ENCODE measurements at regions of chr7 and their contacts with region 1.

Region 1: DNA sequence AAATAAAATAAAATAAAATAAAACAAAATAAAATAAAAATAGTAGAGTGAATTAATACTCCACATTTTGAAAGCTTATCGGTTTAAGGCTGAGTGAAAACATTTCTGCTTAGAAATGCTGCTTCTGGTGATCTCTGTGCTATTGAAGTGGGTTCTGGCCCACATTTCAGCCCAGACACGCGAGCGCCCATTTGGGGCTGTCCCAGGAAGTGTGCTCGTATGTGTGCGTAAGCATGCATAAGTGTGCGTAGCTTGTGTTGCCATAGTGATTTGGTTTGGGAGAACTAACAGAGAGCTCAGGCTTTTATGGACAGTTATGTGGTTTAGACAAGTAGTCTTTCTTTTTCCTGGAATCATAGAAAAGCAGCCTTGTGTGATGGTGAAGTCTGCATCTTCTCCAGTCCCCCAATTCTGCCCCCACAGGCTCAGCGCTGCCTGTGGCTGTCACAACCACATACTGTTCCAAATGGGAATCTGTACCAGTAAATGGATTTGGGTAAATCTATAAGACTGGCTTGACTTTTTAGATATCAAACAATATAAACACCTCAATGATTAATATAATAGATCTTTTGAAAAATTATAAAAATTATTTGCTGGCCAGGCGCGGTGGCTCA is 29.8 kb upstream of the PURB start:
- DNase-seq: no peak
- ATAC-seq: no peak
- H3K4me3 ChIP-seq: no peak overlapping the region
- H3K27ac ChIP-seq: no peak overlapping the region
- H3K4me1 ChIP-seq: peaks cover 8% of the 10 kb centered on the region
- H3K27me3 ChIP-seq: peaks cover 1 to 4% of the 10 kb centered on the region in 2 experiments; a peak in 2 of 5 replicates
- CTCF ChIP-seq: no peak
- EP300 ChIP-seq: no peak
- POLR2A ChIP-seq: no peak
- RAD21 ChIP-seq: no peak

Region 2: GRCh38 chr7:44581879-44582603 is 333.1 kb before region 1 on chr7 and contains the start of gene TMED4:
- CTCF ChIA-PET with region 1: no interaction called
- POLR2A ChIA-PET with region 1: no interaction called
- in situ Hi-C with region 1: no loop called
- intact Hi-C with region 1: no loop called
- DNase-seq: peak; percentile 96
- ATAC-seq: peak; percentile 90
- H3K4me3 ChIP-seq: peak within 1 kb of the TSS; percentile 60 to 87 (median 75)
- H3K27ac ChIP-seq: peak within 1 kb of the TSS; percentile 76
- H3K4me1 ChIP-seq: peaks cover 32% of the 10 kb centered on the region
- H3K27me3 ChIP-seq: peaks cover 0 to 11% of the 10 kb centered on the region in 2 experiments; a peak in 1 of 5 replicates
- CTCF ChIP-seq: no peak
- EP300 ChIP-seq: no peak
- POLR2A ChIP-seq: peak in 1 of 2 experiments; percentile 85; a peak in 2 of 4 replicates
- RAD21 ChIP-seq: peak; percentile 59; the same call in 1 of the 2 replicates
- total RNA-seq, gene TMED4: 39.2 and 81.4 TPM in 2 replicates

Region 3: DNA sequence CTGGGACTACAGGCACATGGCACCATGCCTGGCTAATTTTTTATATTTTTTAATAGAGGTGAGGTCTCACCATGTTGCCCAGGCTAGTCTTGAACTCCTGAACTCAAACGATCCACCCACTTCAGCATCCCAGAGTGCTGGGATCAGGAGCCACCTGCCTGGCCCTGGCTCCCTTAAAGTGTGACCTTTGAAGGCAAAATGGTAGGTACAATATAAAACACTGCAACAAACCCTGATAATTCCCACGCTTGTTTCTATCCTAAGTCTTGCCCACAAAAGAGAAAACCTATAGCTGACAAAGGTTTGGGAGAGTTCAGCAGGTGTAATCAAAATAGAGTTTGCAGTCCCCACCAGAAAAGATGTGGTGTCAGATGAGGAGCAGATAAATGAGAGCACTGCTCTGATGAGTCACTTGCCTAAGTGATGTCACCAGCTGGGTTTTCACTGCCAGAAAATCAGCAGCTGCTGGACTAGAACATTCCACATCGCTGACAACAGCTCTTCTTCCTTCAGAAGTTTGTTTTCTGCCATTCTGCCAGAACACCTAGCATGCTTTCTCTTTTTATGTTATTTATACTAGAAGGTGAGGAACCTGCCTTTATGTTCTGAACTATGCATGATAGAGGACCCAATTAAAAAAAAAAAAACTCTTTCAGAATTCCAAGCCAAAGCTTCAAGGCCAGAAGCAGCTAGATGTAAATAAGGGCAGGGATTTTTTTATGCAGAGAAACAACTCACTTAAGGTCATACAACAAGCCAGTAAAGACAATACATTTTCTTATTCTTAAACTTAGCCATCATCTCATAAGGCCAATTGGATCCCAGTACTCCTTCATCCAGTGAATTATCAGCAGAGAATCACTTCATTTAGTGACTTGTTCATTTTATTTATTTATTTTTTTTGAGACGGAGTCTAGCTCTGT is 47.8 kb before region 1 on chr7:
- CTCF ChIA-PET with region 1: no interaction called
- POLR2A ChIA-PET with region 1: no interaction called
- in situ Hi-C with region 1: loop called (anchors 5 kb)
- intact Hi-C with region 1: no loop called
- DNase-seq: peak; percentile 32
- ATAC-seq: no peak
- H3K4me3 ChIP-seq: no peak overlapping the region
- H3K27ac ChIP-seq: no peak overlapping the region
- H3K4me1 ChIP-seq: no peaks in the 10 kb centered on the region
- H3K27me3 ChIP-seq: no peaks in the 10 kb centered on the region
- CTCF ChIP-seq: no peak
- EP300 ChIP-seq: no peak
- POLR2A ChIP-seq: no peak
- RAD21 ChIP-seq: no peak

Measured in HepG2 (cell line).